HCT116 (cell line): ENCODE measurements at regions of chr9 and their contacts with region 1.

Region 1: GRCh38 chr9:133459476-133460404 is at the start of gene CACFD1:
- DNase-seq: peak; percentile 85
- ATAC-seq: peak; percentile 85
- H3K4me3 ChIP-seq: peak within 1 kb of the TSS; percentile 64 to 67
- H3K27ac ChIP-seq: peak within 1 kb of the TSS; percentile 97
- H3K4me1 ChIP-seq: peaks cover 16 to 17% of the 10 kb centered on the region in 2 experiments
- H3K27me3 ChIP-seq: no peaks in the 10 kb centered on the region
- CTCF ChIP-seq: no peak
- POLR2A ChIP-seq: no peak
- RAD21 ChIP-seq: no peak
- total RNA-seq, gene CACFD1: 6.9 TPM

Region 2: DNA sequence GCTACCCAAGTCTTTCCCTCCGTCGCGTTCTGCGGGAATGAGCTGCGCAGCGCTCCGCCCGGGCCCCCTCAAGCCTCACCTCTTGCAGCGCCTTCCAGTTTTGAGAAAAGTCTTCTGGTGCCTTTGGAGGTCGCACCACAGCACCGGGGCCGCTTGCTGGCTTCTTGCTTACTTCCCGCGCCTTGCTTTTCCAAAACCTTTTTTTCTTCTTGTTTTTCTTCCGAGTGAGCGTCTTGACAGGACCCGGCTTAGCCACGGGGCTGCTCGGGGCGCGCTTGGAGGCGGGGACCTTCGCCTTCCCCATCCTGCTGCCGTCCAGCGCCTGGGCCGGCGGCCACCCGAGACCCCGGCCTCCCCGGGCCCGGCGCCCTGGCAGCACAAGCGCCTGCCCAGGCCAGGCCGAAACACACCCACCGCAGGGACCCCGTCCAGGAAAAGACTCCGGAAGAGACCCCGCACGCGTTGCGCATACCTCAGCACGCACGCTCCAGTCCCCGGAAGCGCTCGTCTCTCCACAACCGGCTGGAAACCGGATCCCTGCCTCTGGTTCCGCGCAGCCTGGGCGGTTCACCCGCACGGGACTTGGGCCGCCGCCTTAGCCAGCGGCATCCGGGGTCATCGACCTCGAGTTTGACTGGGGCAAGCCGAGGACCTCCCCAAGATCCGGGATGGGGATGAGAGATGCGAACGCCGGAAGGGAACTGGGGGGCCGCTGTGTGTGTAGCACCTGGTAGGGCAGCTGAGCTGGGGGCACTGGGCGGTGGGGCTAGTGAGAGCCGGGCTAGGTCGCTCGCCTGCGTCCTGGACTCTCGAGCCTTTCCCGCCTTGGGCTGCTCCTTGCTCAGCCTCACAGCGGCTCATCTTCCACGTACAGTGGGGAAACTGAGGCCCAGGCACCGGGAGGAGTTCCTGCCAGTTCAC is 41.9 kb before region 1 on chr9 and contains the start of gene REXO4:
- CTCF ChIA-PET with region 1: interaction called, 4 read pairs
- POLR2A ChIA-PET with region 1: interaction called, 8 read pairs
- RAD21 ChIA-PET with region 1: no interaction called
- intact Hi-C with region 1: loop called (anchors 5 kb)
- DNase-seq: peak; percentile 85
- ATAC-seq: peak; percentile 84
- H3K4me3 ChIP-seq: peak within 1 kb of the TSS; percentile 96 to 98
- H3K27ac ChIP-seq: peak within 1 kb of the TSS; percentile 83
- H3K4me1 ChIP-seq: peaks cover 7 to 28% of the 10 kb centered on the region in 2 experiments; a peak in 3 of 4 replicates
- H3K27me3 ChIP-seq: no peaks in the 10 kb centered on the region
- CTCF ChIP-seq: no peak
- POLR2A ChIP-seq: peak; percentile 51
- RAD21 ChIP-seq: no peak
- total RNA-seq, gene REXO4: 24.6 TPM

Region 3: DNA sequence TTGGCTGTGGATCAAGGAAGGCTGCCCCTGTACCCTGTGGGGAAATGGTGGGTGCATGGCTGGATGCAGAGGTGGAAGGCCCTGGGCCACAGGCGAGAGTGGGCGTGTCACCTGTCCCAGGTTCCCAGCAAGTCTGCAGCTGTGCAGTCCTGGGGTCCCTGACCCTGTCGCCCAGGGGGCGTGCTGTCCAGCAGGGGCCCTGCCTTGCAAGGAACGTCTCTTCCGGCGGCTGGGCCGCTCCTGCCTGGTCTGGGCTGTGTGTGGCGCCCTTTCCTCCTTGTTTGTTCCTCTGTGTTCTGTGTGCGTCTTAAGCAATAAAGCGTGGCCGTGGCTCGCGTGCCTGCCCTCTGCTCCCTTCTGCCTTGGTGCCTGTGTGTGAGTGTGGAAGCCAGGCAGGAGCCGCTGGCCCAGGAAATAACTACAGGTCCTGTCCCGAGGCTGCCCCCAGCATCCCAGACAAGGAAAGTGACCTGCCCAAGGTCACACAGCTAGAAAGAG is 10.7 kb after region 1 on chr9:
- CTCF ChIA-PET with region 1: no interaction called
- POLR2A ChIA-PET with region 1: no interaction called
- RAD21 ChIA-PET with region 1: no interaction called
- intact Hi-C with region 1: no loop called
- DNase-seq: no peak
- ATAC-seq: peak; percentile 22
- H3K4me3 ChIP-seq: no peak overlapping the region
- H3K27ac ChIP-seq: no peak overlapping the region
- H3K4me1 ChIP-seq: no peaks in the 10 kb centered on the region
- H3K27me3 ChIP-seq: no peaks in the 10 kb centered on the region
- CTCF ChIP-seq: no peak
- POLR2A ChIP-seq: no peak
- RAD21 ChIP-seq: no peak